ENCODE measurements at regions of chr15 and their contacts with region 1.

Region 1: DNA sequence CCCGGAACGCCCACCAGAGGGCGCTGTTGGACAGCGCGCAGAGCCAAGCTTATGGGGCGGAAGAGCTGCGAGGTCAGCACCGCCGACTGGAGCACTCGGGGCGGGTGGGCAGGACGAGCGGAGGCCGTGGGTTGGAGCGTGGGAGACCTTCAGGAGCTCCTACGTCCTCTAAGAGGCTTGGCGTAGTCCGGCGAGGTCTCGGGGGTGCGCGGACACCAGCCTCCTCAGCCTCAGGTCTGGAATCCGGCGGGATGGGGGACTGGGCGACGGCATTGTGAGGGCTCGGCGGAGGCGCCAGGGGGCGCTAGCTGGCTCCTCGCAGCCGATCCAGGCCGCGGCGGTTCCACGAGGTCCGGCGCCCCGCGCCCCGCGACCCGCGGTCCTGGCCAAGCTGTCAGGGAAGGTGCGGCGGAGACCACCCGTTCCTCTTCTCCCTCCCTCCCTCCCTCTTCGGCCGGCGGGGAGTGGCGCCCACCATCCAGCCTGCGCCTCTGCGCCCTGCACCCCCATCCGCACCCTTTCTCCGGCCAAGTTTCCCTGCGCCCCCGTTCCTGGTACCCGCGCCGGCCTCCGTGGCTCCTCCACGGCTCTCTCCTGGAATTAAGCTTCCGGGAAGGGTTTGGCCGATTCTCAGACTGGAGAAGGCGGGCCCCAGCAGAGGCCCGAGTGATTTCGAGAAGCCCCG is 24.3 kb upstream of the POLG start:
- DNase-seq: peak; percentile 68
- H3K4me3 ChIP-seq: peak overlapping the region; percentile 64
- H3K27ac ChIP-seq: no peak overlapping the region
- H3K4me1 ChIP-seq: peaks cover 28% of the 10 kb centered on the region
- H3K27me3 ChIP-seq: peaks cover 100% of the 10 kb centered on the region
- CTCF ChIP-seq: peak; percentile 98

Region 2: GRCh38 chr15:89430530-89431341 is 71.8 kb after region 1 on chr15:
- intact Hi-C with region 1: loop called (anchors 2 kb)
- DNase-seq: peak; percentile 85
- H3K4me3 ChIP-seq: peak overlapping the region; percentile 63
- H3K27ac ChIP-seq: no peak overlapping the region
- H3K4me1 ChIP-seq: peaks cover 13% of the 10 kb centered on the region
- H3K27me3 ChIP-seq: peaks cover 35% of the 10 kb centered on the region
- CTCF ChIP-seq: peak; percentile 99

Measured in left ventricle myocardium inferior (tissue), 1 donor.